H1 (cell line): ENCODE measurements at regions of chr16 and their contacts with region 1.

Region 1: DNA sequence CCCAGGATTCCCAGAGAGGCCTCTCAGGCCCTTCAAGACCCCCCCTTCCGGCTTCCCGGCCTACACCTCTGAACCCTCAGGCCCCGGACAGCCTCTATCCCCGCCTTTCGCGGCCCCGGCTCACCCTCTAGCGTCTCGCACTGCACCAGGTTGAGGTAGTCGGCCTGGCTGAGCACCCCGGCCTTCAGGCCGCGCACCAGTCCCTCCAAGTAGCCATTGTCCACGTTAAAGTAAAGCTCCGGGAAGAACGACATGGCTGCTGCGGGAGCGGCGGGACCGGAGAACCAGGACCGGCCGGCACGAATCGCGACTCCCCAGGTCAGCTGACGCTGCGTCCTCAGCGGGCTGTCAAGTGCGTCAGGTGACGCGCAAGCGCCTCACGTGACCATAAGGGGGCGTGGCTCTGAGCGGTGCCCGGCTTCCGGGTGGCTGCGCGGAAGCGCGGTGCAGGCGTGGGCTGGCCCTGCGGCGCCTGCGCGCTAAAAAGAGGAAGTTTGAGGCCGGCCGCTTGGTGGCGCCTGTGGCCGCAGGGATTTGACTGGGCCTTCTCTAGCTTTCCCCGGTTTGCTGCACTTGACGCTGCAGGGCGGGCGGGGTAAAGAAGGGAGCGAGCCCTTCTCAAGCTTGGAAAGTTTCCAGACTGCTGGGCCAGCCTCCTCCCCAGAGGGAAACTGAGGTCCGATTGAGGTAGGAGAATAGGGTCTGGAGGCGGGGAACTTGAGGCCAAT is at the start of gene ATP6V0D1:
- DNase-seq: peak; percentile 95 to 99
- H3K4me3 ChIP-seq: peak within 1 kb of the TSS; percentile 90 to 93 (median 91)
- H3K27ac ChIP-seq: peak within 1 kb of the TSS; percentile 70; the same call in 1 of the 2 replicates
- H3K4me1 ChIP-seq: peaks cover 0 to 3% (median 3%) of the 10 kb centered on the region in 4 experiments; a peak in 4 of 7 replicates
- H3K27me3 ChIP-seq: peaks cover 0 to 19% (median 10%) of the 10 kb centered on the region in 4 experiments; a peak in 4 of 7 replicates
- CTCF ChIP-seq: peak; percentile 75 to 90 (median 84)
- EP300 ChIP-seq: 0 out of 3 replicates have a peak, but pooled peaks of 1 of the 2 experiments have one; percentile 21
- POLR2A ChIP-seq: peak in 1 of 2 experiments; percentile 70; a peak in 2 of 3 replicates
- RAD21 ChIP-seq: peak; percentile 66 to 76
- total RNA-seq, gene ATP6V0D1: 47.3 and 54.1 TPM in 2 replicates

Region 2: GRCh38 chr16:67456391-67457081 is 24.5 kb before region 1 on chr16:
- CTCF ChIA-PET with region 1: interaction called, 23 read pairs
- POLR2A ChIA-PET with region 1: interaction called, 3 read pairs
- DNase-seq: no peak
- H3K4me3 ChIP-seq: no peak overlapping the region
- H3K27ac ChIP-seq: peak overlapping the region; percentile 22; the same call in 1 of the 2 replicates
- H3K4me1 ChIP-seq: no peaks in the 10 kb centered on the region; a peak in 1 of 7 replicates
- H3K27me3 ChIP-seq: no peaks in the 10 kb centered on the region
- CTCF ChIP-seq: peak; percentile 57 to 65 (median 62)
- EP300 ChIP-seq: no peak
- POLR2A ChIP-seq: no peak
- RAD21 ChIP-seq: peak in 1 of 2 experiments; percentile 46; a peak in 2 of 4 replicates

Region 3: GRCh38 chr16:67470359-67470758 is 10.6 kb before region 1 on chr16:
- CTCF ChIA-PET with region 1: interaction called, 14 read pairs
- POLR2A ChIA-PET with region 1: interaction called, 4 read pairs
- DNase-seq: no peak
- H3K4me3 ChIP-seq: no peak overlapping the region
- H3K27ac ChIP-seq: no peak overlapping the region
- H3K4me1 ChIP-seq: peaks cover 0 to 5% (median 2%) of the 10 kb centered on the region in 4 experiments; a peak in 3 of 7 replicates
- H3K27me3 ChIP-seq: no peaks in the 10 kb centered on the region
- CTCF ChIP-seq: no peak
- EP300 ChIP-seq: no peak
- POLR2A ChIP-seq: no peak
- RAD21 ChIP-seq: no peak

Region 4: GRCh38 chr16:67514382-67514828 is 33.4 kb after region 1 on chr16:
- CTCF ChIA-PET with region 1: interaction called, 55 read pairs
- POLR2A ChIA-PET with region 1: no interaction called
- DNase-seq: peak in 1 of 2 experiments; percentile 69
- H3K4me3 ChIP-seq: no peak overlapping the region
- H3K27ac ChIP-seq: no peak overlapping the region
- H3K4me1 ChIP-seq: no peaks in the 10 kb centered on the region
- H3K27me3 ChIP-seq: peaks cover 0 to 11% (median 5%) of the 10 kb centered on the region in 4 experiments; a peak in 2 of 7 replicates
- CTCF ChIP-seq: peak; percentile 38 to 77 (median 69)
- EP300 ChIP-seq: no peak
- POLR2A ChIP-seq: no peak
- RAD21 ChIP-seq: peak; percentile 55 to 65

Region 5: GRCh38 chr16:67959520-67959919 is 478.5 kb after region 1 on chr16:
- CTCF ChIA-PET with region 1: no interaction called
- POLR2A ChIA-PET with region 1: no interaction called
- DNase-seq: no peak
- H3K4me3 ChIP-seq: no peak overlapping the region
- H3K27ac ChIP-seq: no peak overlapping the region
- H3K4me1 ChIP-seq: peaks cover 0 to 7% (median 2%) of the 10 kb centered on the region in 4 experiments; a peak in 3 of 7 replicates
- H3K27me3 ChIP-seq: no peaks in the 10 kb centered on the region
- CTCF ChIP-seq: no peak
- EP300 ChIP-seq: no peak
- POLR2A ChIP-seq: no peak
- RAD21 ChIP-seq: no peak